Left colon (tissue), 2 donors: ENCODE measurements at regions of chr6 and their contacts with region 1.

Region 1: GRCh38 chr6:105484238-105485161 is 81.6 kb upstream of the PREP start:
- DNase-seq: no peak
- ATAC-seq: peak; percentile 68

Region 2: GRCh38 chr6:106225581-106225980 is 741.1 kb after region 1 on chr6:
- intact Hi-C with region 1: loop called in 1 of 2 experiments (anchors 5 kb)
- DNase-seq: no peak
- ATAC-seq: no peak